AG04449 (cell line): ENCODE measurements at regions of chr12 and their contacts with region 1.

Region 1: DNA sequence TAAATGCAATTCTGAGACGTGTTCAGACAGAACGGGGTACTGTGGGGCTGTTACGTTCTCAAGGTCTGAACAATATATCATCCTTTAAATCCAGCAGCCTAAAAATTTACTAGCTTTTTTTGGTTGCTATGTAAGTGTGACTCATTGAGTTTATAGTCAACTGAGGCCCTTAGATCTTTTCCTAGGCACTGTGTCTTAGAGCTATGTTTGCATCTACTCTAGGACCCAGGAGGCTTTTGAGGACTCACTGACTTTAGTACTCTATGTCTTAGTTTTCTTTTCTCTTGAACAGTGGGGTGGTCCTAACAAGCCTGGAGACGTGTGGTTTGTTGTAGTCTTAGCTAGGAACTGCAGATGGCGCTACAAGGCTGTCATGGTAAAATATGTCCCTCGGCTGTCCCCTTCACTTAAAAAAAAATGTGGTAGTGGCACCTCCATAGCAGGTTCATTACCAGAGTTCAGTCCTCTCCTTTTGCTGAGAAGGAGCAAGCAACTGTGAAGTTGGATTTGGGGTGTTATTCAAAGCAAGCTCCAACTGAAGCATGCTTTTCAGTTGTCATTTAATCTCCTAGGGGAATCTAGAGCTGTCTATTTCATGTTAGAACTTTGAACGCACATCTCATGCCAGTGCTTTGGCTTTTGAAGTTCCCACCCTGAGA is 8.7 kb upstream of the SPATS2 start:
- DNase-seq: no peak
- H3K4me3 ChIP-seq: no peak overlapping the region
- CTCF ChIP-seq: peak; percentile 59

Region 2: DNA sequence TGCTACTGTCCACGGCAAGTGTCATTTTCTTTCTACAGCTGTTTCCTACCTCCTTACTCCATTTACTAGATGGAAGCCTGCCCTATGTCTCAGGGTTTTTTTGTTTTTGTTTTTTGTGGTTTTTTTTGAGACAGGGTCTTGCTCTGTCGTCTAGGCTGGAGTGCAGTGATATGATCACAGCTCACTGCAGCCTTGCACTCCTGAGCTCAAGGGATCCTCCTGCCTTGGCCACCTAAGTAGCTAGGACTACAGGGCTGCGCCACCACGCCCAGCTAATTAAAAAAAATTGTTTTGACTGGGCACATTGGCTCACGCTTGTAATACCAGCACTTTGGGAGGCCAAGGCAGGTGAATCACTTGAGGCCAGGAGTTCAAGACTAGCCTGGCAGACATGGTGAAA is 184.4 kb before region 1 on chr12:
- CTCF ChIA-PET with region 1: no interaction called
- POLR2A ChIA-PET with region 1: no interaction called
- DNase-seq: no peak
- H3K4me3 ChIP-seq: no peak overlapping the region
- CTCF ChIP-seq: no peak

Region 3: DNA sequence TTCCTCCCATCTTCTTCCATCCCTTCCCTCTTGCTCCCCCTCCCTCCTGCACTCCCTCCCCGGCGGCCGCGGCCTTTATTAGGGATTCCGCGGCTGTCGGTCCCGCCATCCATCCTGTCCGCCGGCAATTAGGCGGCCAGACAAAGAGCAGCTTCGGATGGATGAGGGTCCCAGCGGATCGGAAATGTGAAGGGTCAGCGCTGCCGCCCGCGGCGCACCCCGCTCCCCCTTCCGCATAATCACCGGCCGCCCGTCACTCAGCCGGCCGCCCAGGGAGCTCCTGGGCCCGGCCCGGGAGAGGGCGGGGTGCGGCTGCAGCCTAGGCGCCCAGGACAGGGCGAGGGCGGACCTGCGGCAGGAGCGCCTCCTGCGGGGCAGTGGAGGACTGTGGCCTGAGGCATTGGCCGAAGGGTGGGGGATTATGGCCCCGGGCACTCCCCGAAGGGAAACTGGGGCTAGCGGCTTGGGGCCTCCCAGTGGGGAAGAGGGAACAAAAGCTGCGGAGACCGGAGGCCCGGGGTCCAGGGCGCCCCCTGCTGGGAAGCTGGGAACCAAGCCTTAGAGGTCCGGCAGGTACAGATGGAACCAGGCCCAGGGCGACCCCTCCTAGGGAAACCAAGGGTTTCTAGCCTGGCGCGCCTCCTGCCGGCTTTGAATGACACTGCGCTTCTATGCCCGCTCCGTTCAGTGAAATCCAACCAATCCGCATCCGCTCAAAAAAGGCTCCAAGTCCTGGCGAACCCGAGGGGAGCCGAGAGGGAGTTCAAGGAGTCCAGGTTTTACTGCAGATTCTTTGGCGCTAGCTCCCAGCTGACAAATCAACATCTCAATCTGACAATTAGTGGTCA is 16.3 kb before region 1 on chr12:
- CTCF ChIA-PET with region 1: interaction called, 424 read pairs
- POLR2A ChIA-PET with region 1: no interaction called
- DNase-seq: no peak
- H3K4me3 ChIP-seq: peak overlapping the region; percentile 45
- CTCF ChIP-seq: peak; percentile 67

Region 4: DNA sequence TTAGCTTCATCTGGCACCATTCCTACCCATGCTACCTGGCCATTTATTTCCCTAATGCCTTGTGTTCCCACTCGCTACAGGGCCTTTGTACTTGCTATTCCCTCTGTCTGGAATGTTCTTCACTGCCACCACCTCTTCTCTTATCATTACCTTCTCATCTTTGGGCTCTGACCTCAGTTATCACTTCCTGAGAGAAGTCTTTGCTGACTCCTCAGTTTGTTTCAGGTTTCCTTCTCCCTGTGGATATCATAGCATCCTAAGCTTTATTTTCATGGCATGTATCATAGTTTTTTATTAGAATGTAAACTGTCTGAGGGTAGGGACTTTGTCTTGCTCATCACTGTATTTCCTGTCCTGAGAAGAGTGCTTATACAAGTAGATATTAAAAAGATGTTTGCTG is 38.4 kb after region 1 on chr12:
- CTCF ChIA-PET with region 1: interaction called, 12 read pairs
- POLR2A ChIA-PET with region 1: no interaction called
- DNase-seq: no peak
- H3K4me3 ChIP-seq: no peak overlapping the region
- CTCF ChIP-seq: no peak

Region 5: GRCh38 chr12:49482095-49483051 is 123.8 kb after region 1 on chr12:
- CTCF ChIA-PET with region 1: interaction called, 25 read pairs
- POLR2A ChIA-PET with region 1: no interaction called
- DNase-seq: no peak
- H3K4me3 ChIP-seq: no peak overlapping the region
- CTCF ChIP-seq: no peak

Region 6: GRCh38 chr12:49527361-49528130 is 168.9 kb after region 1 on chr12:
- CTCF ChIA-PET with region 1: interaction called, 52 read pairs
- POLR2A ChIA-PET with region 1: no interaction called
- DNase-seq: no peak
- H3K4me3 ChIP-seq: no peak overlapping the region
- CTCF ChIP-seq: no peak

Region 7: GRCh38 chr12:49553512-49554088 is 195.0 kb after region 1 on chr12:
- CTCF ChIA-PET with region 1: interaction called, 25 read pairs
- POLR2A ChIA-PET with region 1: interaction called, 4 read pairs
- DNase-seq: no peak
- H3K4me3 ChIP-seq: no peak overlapping the region
- CTCF ChIP-seq: peak; percentile 16